IMR-90 (cell line): ENCODE measurements at regions of chr16 and their contacts with region 1.

Region 1: DNA sequence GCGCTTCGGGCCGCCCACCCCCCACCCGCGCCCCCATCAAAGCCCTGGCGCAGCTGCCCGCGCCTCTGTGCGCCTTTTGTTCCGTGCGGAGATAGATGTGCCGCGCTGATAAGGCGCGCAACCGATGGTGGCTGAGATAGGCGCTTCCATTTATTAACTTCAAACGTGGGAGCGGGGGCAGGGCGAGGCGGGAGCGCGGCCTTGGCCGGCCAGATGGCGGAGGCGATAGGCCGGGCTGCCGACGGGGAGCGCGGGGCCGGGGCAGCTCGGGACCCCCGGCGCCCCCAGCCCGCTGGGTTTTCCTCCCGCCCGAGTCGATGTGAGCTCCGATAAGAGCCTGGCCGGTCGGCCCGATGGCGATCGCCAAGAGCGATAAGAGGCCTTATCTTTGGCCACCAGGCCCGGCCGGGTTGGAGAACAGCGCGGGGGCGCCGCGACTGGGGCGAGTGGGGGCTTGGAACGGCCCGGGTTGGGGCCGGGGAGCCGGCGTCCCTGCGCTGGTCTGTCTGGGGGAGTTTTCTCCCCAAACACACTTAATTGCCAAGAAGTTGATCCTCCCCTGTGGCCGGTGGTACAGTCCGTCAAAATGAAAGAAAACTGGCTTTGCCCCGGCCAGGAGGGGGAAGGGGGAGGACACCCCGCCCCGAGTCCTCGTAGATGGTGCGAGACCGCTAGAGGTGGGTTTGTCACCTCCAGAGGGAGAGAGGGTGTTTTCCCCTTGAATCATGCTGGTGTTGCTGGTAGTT is 2.7 kb downstream of the ZFPM1 start:
- DNase-seq: peak; percentile 43
- ATAC-seq: no peak
- H3K4me3 ChIP-seq: peak overlapping the region; percentile 55
- H3K27ac ChIP-seq: no peak overlapping the region
- H3K4me1 ChIP-seq: peaks cover 17% of the 10 kb centered on the region
- H3K27me3 ChIP-seq: no peaks in the 10 kb centered on the region
- CTCF ChIP-seq: no peak
- POLR2A ChIP-seq: no peak
- RAD21 ChIP-seq: no peak

Region 2: DNA sequence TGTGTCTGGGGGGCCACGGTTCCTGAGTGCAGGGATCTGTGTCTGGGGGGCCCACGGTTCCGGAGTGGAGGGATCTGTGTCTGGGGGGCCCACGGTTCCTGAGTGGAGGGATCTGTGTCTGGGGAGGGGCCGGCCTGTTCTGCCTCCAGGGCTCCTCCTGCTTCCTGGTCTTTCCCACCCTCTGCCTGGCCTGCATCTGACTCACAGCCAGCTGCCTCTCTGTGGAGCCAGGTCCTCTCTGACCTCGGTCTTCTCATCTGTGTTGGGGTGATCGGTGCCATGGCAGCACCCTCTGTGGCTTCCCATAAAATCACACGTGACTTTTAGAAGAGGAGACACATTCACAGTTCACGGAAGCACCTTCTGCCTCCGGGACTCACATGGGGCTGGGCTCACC is 47.6 kb after region 1 on chr16:
- CTCF ChIA-PET with region 1: no interaction called
- POLR2A ChIA-PET with region 1: no interaction called
- dilution Hi-C with region 1: no loop called
- in situ Hi-C with region 1: no loop called
- intact Hi-C with region 1: loop called (anchors 2 kb)
- DNase-seq: peak; percentile 25
- ATAC-seq: no peak; the same call in 1 of the 2 replicates
- H3K4me3 ChIP-seq: no peak overlapping the region
- H3K27ac ChIP-seq: no peak overlapping the region
- H3K4me1 ChIP-seq: no peaks in the 10 kb centered on the region
- H3K27me3 ChIP-seq: no peaks in the 10 kb centered on the region
- CTCF ChIP-seq: no peak
- POLR2A ChIP-seq: no peak
- RAD21 ChIP-seq: no peak